ENCODE measurements at regions of chr6 and their contacts with region 1.

Region 1: GRCh38 chr6:111478749-111479148 is 4.3 kb downstream of the REV3L start:
- DNase-seq: no peak

Region 2: GRCh38 chr6:111361648-111362047 is 117.1 kb before region 1 on chr6:
- intact Hi-C with region 1: loop called (anchors 10 kb)
- DNase-seq: peak in 41 of 42 donors; percentile 5 to 85 (median 59)

Region 3: GRCh38 chr6:111406200-111406721 is 72.5 kb before region 1 on chr6:
- intact Hi-C with region 1: no loop called
- DNase-seq: peak in 1 of 42 donors; percentile 35

Region 4: DNA sequence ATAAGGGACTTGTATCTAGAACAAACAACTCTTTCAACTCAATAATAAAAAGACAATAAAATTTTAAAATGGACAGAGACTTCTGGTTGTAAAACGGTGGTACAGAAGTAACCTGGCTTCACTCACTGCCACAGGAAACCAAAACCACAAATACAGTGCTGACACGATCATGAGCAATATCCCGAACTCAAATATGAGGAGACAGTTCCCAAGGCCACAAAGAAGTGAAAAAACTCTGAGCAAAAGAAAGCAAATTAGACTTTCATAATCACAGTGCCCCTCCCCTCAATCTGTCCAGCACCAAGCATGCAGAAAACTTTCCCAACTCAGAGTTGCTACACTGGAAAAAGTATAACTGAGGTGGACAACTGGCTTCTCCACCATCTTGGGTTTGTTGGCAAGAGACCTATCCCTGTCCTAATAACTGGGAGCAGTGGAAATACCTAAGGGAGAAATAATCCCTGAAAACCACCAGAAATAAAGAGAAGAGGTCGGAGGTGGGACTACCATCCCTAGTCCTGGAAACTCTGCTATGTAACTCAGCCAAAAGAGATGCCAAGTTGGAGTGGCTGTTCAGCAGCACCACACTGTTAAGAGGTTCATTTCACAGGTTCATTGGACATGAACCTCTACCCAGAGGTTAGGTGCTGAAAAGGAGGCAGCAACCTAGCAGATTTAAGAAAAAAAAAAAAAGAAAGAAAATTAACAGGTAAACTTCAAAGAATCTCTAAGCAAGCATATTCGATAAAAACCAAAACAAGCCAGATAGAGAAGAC is 51.2 kb before region 1 on chr6:
- intact Hi-C with region 1: loop called (anchors 10 kb)
- DNase-seq: no peak